ENCODE measurements at regions of chr6 and their contacts with region 1.

Region 1: GRCh38 chr6:53603386-53604116 is 58.6 kb upstream of the GCLC start:
- DNase-seq: no peak
- ATAC-seq: peak; percentile 67 to 86 (median 74)
- H3K4me3 ChIP-seq: no peak overlapping the region
- H3K27ac ChIP-seq: peak overlapping the region in 2 of 3 donors; percentile 35 to 41
- H3K4me1 ChIP-seq: peaks cover 0 to 17% (median 5%) of the 10 kb centered on the region in 4 donors
- H3K27me3 ChIP-seq: no peaks in the 10 kb centered on the region
- CTCF ChIP-seq: no peak
- POLR2A ChIP-seq: no peak

Region 2: GRCh38 chr6:53556986-53557715 is 46.4 kb before region 1 on chr6:
- intact Hi-C with region 1: loop called in 1 of 2 experiments (anchors 10 kb)
- DNase-seq: no peak
- ATAC-seq: peak; percentile 51 to 78 (median 64)
- H3K4me3 ChIP-seq: no peak overlapping the region
- H3K27ac ChIP-seq: peak overlapping the region in 1 of 3 donors; percentile 41
- H3K4me1 ChIP-seq: peaks cover 0 to 4% (median 0%) of the 10 kb centered on the region in 4 donors
- H3K27me3 ChIP-seq: no peaks in the 10 kb centered on the region
- CTCF ChIP-seq: no peak
- POLR2A ChIP-seq: no peak

Region 3: DNA sequence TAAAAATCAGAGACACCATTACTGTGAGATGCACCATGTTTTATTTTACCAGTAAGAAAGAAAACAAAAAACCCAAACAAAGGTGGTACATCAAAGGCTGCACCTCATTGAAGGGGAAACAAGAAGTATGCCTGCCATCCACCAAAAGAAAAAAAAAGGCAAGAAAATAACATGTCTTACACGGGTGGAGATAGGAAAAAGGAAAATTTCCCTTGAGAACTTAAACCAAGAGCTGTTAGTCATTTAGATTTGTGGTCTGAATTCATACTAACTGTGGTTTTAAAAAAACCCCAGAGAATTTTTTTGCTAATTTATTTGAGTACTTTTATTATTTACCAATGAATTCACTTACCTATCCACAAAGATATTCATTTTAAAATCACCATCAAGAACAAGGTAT is 335.3 kb after region 1 on chr6:
- intact Hi-C with region 1: no loop called
- DNase-seq: no peak
- ATAC-seq: no peak
- H3K4me3 ChIP-seq: no peak overlapping the region
- H3K27ac ChIP-seq: no peak overlapping the region
- H3K4me1 ChIP-seq: no peaks in the 10 kb centered on the region
- H3K27me3 ChIP-seq: no peaks in the 10 kb centered on the region
- CTCF ChIP-seq: no peak
- POLR2A ChIP-seq: no peak